CD4-positive, alpha-beta T cell (primary cell): ENCODE measurements at regions of chr3 and their contacts with region 1.

Region 1: GRCh38 chr3:101809178-101810021 is 30.4 kb downstream of the NXPE3 start:
- DNase-seq: peak in 10 of 14 experiments; percentile 4 to 79 (median 27)
- ATAC-seq: peak; percentile 73
- H3K4me3 ChIP-seq: no peak overlapping the region
- H3K4me3 Mint-ChIP-seq: no peak overlapping the region
- H3K27ac ChIP-seq: peak overlapping the region; percentile 25 to 43
- H3K27ac Mint-ChIP-seq: peak overlapping the region; percentile 73
- H3K4me1 ChIP-seq: peaks cover 20% of the 10 kb centered on the region
- H3K4me1 Mint-ChIP-seq: peaks cover 50% of the 10 kb centered on the region
- H3K27me3 ChIP-seq: no peaks in the 10 kb centered on the region
- H3K27me3 Mint-ChIP-seq: no peaks in the 10 kb centered on the region
- CTCF ChIP-seq: peak; percentile 72

Region 2: GRCh38 chr3:101827211-101828174 is 18.1 kb after region 1 on chr3:
- CTCF ChIA-PET with region 1: interaction called, 3 read pairs
- POLR2A ChIA-PET with region 1: interaction called, 7 read pairs
- intact Hi-C with region 1: loop called in 1 of 2 experiments (anchors 2 kb)
- DNase-seq: peak; percentile 55 to 93 (median 66)
- ATAC-seq: peak; percentile 79
- H3K4me3 ChIP-seq: peak overlapping the region; percentile 70
- H3K4me3 Mint-ChIP-seq: peak overlapping the region; percentile 98
- H3K27ac ChIP-seq: peak overlapping the region; percentile 90 to 93
- H3K27ac Mint-ChIP-seq: peak overlapping the region; percentile 99
- H3K4me1 ChIP-seq: peaks cover 31% of the 10 kb centered on the region
- H3K4me1 Mint-ChIP-seq: peaks cover 66% of the 10 kb centered on the region
- H3K27me3 ChIP-seq: no peaks in the 10 kb centered on the region
- H3K27me3 Mint-ChIP-seq: no peaks in the 10 kb centered on the region
- CTCF ChIP-seq: no peak

Region 3: GRCh38 chr3:102224128-102224527 is 414.7 kb after region 1 on chr3:
- CTCF ChIA-PET with region 1: interaction called, 33 read pairs
- POLR2A ChIA-PET with region 1: interaction called, 10 read pairs
- intact Hi-C with region 1: loop called (anchors 1 kb)
- DNase-seq: peak in 4 of 14 experiments; percentile 3 to 38 (median 17)
- ATAC-seq: no peak
- H3K4me3 ChIP-seq: no peak overlapping the region
- H3K4me3 Mint-ChIP-seq: no peak overlapping the region
- H3K27ac ChIP-seq: no peak overlapping the region
- H3K27ac Mint-ChIP-seq: peak overlapping the region; percentile 16
- H3K4me1 ChIP-seq: peaks cover 23% of the 10 kb centered on the region
- H3K4me1 Mint-ChIP-seq: peaks cover 43% of the 10 kb centered on the region
- H3K27me3 ChIP-seq: no peaks in the 10 kb centered on the region
- H3K27me3 Mint-ChIP-seq: no peaks in the 10 kb centered on the region
- CTCF ChIP-seq: no peak

Region 4: DNA sequence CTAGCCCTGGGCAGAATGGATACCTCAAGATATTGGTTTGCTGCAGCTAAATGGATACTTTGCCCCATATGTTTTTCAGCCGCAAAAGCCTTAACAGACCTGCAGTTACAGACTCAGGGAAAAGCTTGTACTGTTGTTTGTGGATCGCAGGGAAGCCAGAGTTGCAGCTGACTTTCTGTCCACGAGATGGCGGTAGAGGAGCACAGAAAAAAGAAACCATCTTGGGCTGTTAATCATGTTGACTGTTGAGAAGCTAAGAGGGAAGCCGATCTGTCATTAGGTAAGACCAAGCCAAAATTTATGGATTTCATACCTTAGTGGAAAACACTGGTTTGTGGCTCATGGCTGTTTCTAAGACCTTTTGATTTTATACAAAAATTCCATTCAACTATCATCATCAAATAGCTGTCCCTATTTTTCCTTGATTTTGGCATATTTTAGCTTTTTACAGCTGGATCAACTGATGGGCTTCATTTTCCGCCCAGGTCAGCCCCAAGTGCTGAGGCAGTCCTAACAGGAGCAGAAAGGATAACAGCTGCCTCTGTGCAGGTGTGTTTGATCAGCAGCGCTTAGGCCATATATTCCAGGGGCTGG is 419.8 kb after region 1 on chr3:
- CTCF ChIA-PET with region 1: interaction called, 33 read pairs
- POLR2A ChIA-PET with region 1: interaction called, 10 read pairs
- intact Hi-C with region 1: loop called (anchors 1 kb)
- DNase-seq: peak; percentile 51 to 88 (median 72)
- ATAC-seq: peak; percentile 92
- H3K4me3 ChIP-seq: no peak overlapping the region
- H3K4me3 Mint-ChIP-seq: no peak overlapping the region
- H3K27ac ChIP-seq: no peak overlapping the region
- H3K27ac Mint-ChIP-seq: no peak overlapping the region
- H3K4me1 ChIP-seq: peaks cover 3% of the 10 kb centered on the region
- H3K4me1 Mint-ChIP-seq: peaks cover 17% of the 10 kb centered on the region
- H3K27me3 ChIP-seq: no peaks in the 10 kb centered on the region
- H3K27me3 Mint-ChIP-seq: no peaks in the 10 kb centered on the region
- CTCF ChIP-seq: peak; percentile 93

Region 5: GRCh38 chr3:102536456-102536855 is 727.1 kb after region 1 on chr3:
- CTCF ChIA-PET with region 1: interaction called, 4 read pairs
- POLR2A ChIA-PET with region 1: no interaction called
- intact Hi-C with region 1: loop called (anchors 1 to 5 kb)
- DNase-seq: peak in 3 of 14 experiments; percentile 32 to 45 (median 42)
- ATAC-seq: no peak
- H3K4me3 ChIP-seq: no peak overlapping the region
- H3K4me3 Mint-ChIP-seq: no peak overlapping the region
- H3K27ac ChIP-seq: no peak overlapping the region
- H3K27ac Mint-ChIP-seq: no peak overlapping the region
- H3K4me1 ChIP-seq: no peaks in the 10 kb centered on the region
- H3K4me1 Mint-ChIP-seq: no peaks in the 10 kb centered on the region
- H3K27me3 ChIP-seq: no peaks in the 10 kb centered on the region
- H3K27me3 Mint-ChIP-seq: peaks cover 16% of the 10 kb centered on the region
- CTCF ChIP-seq: peak; percentile 37